Ascending aorta (tissue), 2 donors: ENCODE measurements at regions of chr3 and their contacts with region 1.

Region 1: GRCh38 chr3:127697551-127698240 is 24.9 kb downstream of the ABTB1 start:
- DNase-seq: peak; percentile 84 to 93
- H3K4me3 ChIP-seq: peak overlapping the region; percentile 27 to 33
- H3K27ac ChIP-seq: peak overlapping the region; percentile 85 to 94
- H3K4me1 ChIP-seq: peaks cover 24 to 44% of the 10 kb centered on the region in 2 donors
- H3K27me3 ChIP-seq: no peaks in the 10 kb centered on the region
- CTCF ChIP-seq: no peak

Region 2: GRCh38 chr3:127735767-127736704 is 38.3 kb after region 1 on chr3:
- intact Hi-C with region 1: loop called (anchors 1 kb)
- DNase-seq: peak in 1 of 2 donors; percentile 78
- H3K4me3 ChIP-seq: peak overlapping the region in 1 of 2 donors; percentile 35
- H3K27ac ChIP-seq: peak overlapping the region; percentile 57 to 62
- H3K4me1 ChIP-seq: peaks cover 5 to 68% of the 10 kb centered on the region in 2 donors
- H3K27me3 ChIP-seq: no peaks in the 10 kb centered on the region
- CTCF ChIP-seq: no peak

Region 3: DNA sequence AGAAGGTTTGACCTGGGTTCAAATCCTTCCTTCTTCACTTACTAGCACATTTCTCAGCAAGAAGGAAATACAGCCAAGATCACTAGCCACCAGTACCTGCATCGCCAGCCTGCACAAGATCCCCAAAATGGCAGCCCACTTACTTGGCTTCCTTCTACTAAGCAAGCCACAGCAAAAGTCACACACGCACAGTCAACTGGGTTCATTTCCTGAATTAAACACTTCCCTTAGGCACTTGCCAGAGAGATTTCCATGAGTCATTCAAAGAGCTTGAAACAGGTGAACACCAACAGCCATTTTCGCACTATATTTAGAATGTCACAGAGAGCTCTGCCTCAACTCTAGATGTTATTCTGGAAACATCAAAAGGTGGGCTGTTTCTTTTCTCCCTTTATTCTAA is 82.1 kb after region 1 on chr3:
- intact Hi-C with region 1: loop called (anchors 2 kb)
- DNase-seq: no peak
- H3K4me3 ChIP-seq: no peak overlapping the region
- H3K27ac ChIP-seq: peak overlapping the region; percentile 75 to 80
- H3K4me1 ChIP-seq: peaks cover 13 to 44% of the 10 kb centered on the region in 2 donors
- H3K27me3 ChIP-seq: no peaks in the 10 kb centered on the region
- CTCF ChIP-seq: no peak

Region 4: DNA sequence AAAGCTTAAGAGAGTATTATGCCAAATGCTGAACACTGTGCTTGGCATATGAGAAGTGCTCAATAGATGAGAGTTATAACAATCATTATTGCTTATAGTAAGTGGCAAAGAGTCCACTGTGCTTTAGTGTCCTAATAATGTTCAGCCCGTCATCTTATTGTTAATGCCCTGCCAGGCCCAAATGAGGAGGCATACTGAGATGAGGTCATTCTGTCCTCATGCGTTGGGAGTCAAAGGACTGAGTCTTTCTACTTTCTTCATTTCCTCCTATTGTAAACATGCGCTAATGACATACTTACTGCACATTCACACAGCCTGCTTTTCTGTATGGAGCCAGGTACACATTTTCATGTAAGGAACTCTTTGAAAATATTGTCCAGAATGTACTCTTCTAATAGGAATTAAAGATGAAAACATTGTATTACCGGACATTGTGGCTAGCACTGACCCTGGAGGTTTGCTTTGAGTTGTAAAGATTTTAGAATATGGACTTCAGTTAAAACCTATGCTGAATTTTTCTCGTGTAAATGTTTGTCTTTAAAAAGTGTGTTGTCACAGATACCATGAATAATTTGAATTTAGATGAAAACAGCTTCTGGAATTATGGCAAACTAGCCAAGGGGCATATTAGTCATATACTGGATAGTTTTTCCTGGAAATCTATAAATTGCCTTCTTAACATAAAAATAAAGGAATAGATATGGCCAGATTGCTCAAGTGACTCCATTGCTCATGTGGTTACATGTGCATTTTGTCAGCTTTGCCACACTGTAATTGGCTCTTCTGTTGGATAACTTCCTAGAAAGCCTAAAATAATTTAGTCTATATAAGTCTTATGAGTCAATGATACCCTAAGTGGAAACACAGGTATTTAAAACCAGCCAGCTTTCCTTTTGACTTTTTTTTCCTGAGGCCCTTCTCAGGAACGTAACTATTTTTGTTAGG is 255.7 kb after region 1 on chr3:
- intact Hi-C with region 1: loop called (anchors 5 kb)
- DNase-seq: no peak
- H3K4me3 ChIP-seq: no peak overlapping the region
- H3K27ac ChIP-seq: peak overlapping the region; percentile 58 to 66
- H3K4me1 ChIP-seq: peaks cover 0 to 20% of the 10 kb centered on the region in 2 donors
- H3K27me3 ChIP-seq: no peaks in the 10 kb centered on the region
- CTCF ChIP-seq: no peak